Breast epithelium (tissue), 4 donors: ENCODE measurements at regions of chr13 and their contacts with region 1.

Region 1: DNA sequence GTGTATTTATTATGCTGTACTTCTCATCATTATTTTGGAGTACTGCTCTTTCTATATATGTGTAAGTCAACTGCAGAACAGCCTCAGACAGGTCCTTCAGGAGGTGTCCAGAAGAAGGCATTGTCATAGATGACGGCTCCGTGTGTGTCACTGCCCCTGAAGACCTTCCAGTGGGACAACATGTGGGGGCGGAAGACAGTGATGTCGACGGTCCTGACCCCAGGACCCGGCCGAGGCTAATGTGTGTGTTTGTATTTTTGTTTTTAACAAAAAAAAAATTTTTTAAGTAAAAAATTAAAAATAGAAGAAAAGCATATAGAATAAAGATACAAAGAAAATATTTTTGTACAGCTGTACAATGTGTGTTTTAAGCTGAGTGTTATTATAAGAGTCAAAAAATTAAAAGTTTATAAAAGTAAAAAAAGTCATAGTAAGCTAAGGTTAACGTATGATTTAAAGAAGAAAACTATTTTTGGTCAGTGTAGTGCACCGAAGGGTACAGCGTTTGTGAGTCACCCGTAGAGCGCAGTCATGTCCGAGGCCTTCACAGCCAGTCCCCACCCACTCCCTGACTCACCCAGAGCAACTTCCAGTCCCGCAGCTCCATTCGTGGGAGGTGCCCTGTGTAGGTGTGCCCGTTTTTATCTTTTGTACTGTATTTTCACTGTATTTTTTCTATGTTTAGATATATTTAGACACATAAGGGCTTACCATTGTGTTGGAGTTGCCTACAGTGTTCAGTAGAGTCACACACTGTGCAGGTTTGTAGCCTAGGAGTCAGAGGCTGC is 42.2 kb upstream of the SPACA7 start:
- DNase-seq: no peak
- H3K4me3 ChIP-seq: no peak overlapping the region
- H3K27ac ChIP-seq: no peak overlapping the region
- H3K4me1 ChIP-seq: no peaks in the 10 kb centered on the region
- H3K27me3 ChIP-seq: peaks cover 0 to 57% of the 10 kb centered on the region in 2 donors
- CTCF ChIP-seq: no peak
- POLR2A ChIP-seq: no peak

Region 2: GRCh38 chr13:112225429-112226090 is 108.4 kb before region 1 on chr13:
- intact Hi-C with region 1: no loop called
- DNase-seq: no peak
- H3K4me3 ChIP-seq: no peak overlapping the region
- H3K27ac ChIP-seq: no peak overlapping the region
- H3K4me1 ChIP-seq: no peaks in the 10 kb centered on the region
- H3K27me3 ChIP-seq: no peaks in the 10 kb centered on the region
- CTCF ChIP-seq: no peak
- POLR2A ChIP-seq: no peak

Region 3: GRCh38 chr13:112397108-112397507 is 63.2 kb after region 1 on chr13:
- intact Hi-C with region 1: no loop called
- DNase-seq: no peak
- H3K4me3 ChIP-seq: no peak overlapping the region
- H3K27ac ChIP-seq: no peak overlapping the region
- H3K4me1 ChIP-seq: no peaks in the 10 kb centered on the region
- H3K27me3 ChIP-seq: no peaks in the 10 kb centered on the region
- CTCF ChIP-seq: no peak
- POLR2A ChIP-seq: no peak

Region 4: DNA sequence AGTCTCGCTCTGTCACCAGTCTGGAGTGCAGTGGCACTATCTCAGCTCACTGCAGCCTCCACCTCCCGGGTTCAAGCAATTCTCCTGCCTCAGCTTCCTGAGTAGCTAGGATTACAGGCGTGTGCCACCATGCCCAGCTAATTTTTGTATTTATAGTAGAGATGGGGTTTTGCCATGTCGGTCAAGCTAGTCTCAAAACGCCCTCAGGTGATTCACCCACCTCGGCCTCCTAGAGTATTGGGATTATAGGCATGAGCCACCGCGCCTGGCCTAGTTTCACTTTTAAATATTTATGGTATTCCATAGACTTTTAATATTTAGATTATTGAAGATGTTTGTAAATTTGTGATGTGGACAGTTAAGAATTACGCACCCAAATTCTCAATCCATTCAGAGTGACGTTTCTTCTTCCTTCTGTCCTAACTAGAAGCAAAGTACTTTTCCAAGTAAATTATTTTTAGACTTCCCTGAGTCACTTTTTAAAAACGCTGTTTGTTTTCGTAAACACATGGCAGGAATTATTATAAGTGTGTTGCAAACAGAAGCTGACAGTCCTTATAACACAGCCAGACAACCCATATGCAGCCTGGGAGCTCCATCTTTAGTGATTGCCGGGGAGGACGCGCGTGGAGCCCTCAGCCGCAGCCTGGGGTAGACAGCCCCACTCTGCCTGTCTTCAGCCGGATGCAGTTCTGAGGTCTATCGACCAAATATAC is 487.5 kb after region 1 on chr13:
- intact Hi-C with region 1: loop called (anchors 5 kb)
- DNase-seq: no peak
- H3K4me3 ChIP-seq: no peak overlapping the region
- H3K27ac ChIP-seq: no peak overlapping the region
- H3K4me1 ChIP-seq: no peaks in the 10 kb centered on the region
- H3K27me3 ChIP-seq: no peaks in the 10 kb centered on the region
- CTCF ChIP-seq: no peak
- POLR2A ChIP-seq: no peak